K562 (cell line): ENCODE measurements at regions of chr7 and their contacts with region 1.

Region 1: DNA sequence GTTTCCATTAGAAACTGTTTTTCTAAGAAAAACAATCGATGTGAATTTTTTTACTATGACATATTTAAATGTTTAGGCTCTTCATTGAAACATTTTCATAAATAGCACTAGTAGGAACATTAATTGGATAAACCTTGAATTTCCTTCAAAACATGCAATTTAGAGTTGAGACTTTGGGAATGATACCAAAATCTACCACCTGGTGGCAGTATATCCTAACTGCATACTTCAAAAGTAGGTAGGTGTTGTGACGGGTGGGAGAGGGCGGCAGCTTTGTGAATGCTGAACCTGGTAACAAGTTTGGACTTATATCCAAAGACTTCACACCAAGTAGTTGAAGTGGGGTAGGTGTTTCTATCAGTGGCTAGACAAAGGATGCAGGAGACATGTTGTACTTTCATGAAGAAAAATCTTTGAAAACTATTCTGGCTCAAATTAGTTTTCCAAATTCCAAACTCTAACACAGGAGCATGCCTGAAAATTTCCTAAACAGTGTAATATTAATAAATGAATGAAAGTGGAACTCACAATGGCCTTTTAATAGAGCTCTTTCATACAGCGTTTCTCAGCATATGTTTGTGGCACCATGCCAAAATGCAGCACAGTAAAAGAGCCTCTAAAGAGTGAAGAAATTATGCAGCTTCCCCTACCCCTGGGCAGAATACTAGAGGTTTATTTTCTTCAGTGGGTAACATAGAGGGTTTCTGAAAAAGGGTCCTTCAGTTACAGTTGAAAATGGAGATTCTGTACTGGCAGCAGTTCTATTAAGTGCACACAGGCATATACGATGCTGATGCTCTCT is 201.0 kb upstream of the TPK1 start:
- DNase-seq: peak; percentile 41 to 66 (median 58)
- ATAC-seq: peak; percentile 81
- H3K4me3 ChIP-seq: no peak overlapping the region
- H3K27ac ChIP-seq: no peak overlapping the region
- H3K4me1 ChIP-seq: no peaks in the 10 kb centered on the region
- H3K27me3 ChIP-seq: no peaks in the 10 kb centered on the region
- CTCF ChIP-seq: peak; percentile 46 to 77 (median 75); a peak in 5 of 6 replicates
- EP300 ChIP-seq: no peak
- POLR2A ChIP-seq: no peak
- RAD21 ChIP-seq: peak; percentile 83 to 85

Region 2: DNA sequence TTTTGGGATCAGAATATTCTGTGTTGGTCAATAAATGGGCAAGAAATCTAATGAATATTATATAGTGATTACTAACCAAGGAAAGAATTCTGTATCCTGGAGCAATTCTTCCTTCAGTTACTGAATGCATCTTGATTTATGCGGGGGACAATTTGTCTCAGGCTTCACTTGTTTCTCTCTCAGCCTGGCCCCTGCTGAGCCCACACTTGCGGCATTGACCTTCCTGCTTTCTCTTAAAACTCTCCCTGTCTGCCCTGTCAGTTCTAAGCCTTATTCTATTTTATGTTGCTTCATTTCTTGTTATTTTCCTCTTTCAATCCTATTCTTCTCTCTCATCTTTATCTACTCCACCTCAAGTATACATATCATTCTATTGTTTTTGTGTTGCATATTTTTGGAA is 78.8 kb before region 1 on chr7:
- CTCF ChIA-PET with region 1: no interaction called
- POLR2A ChIA-PET with region 1: no interaction called
- in situ Hi-C with region 1: no loop called
- intact Hi-C with region 1: no loop called
- DNase-seq: no peak
- ATAC-seq: no peak
- H3K4me3 ChIP-seq: no peak overlapping the region
- H3K27ac ChIP-seq: no peak overlapping the region
- H3K4me1 ChIP-seq: no peaks in the 10 kb centered on the region
- H3K27me3 ChIP-seq: no peaks in the 10 kb centered on the region
- CTCF ChIP-seq: no peak
- EP300 ChIP-seq: no peak
- POLR2A ChIP-seq: no peak
- RAD21 ChIP-seq: no peak

Region 3: GRCh38 chr7:145050415-145050814 is 13.6 kb after region 1 on chr7:
- CTCF ChIA-PET with region 1: no interaction called
- POLR2A ChIA-PET with region 1: no interaction called
- in situ Hi-C with region 1: no loop called
- intact Hi-C with region 1: no loop called
- DNase-seq: no peak
- ATAC-seq: no peak
- H3K4me3 ChIP-seq: no peak overlapping the region
- H3K27ac ChIP-seq: no peak overlapping the region
- H3K4me1 ChIP-seq: no peaks in the 10 kb centered on the region
- H3K27me3 ChIP-seq: no peaks in the 10 kb centered on the region
- CTCF ChIP-seq: no peak
- EP300 ChIP-seq: no peak
- POLR2A ChIP-seq: no peak
- RAD21 ChIP-seq: no peak

Region 4: GRCh38 chr7:145848691-145849090 is 811.9 kb after region 1 on chr7:
- CTCF ChIA-PET with region 1: no interaction called
- POLR2A ChIA-PET with region 1: no interaction called
- in situ Hi-C with region 1: no loop called
- intact Hi-C with region 1: loop called (anchors 2 kb)
- DNase-seq: peak; percentile 21 to 61 (median 32)
- ATAC-seq: peak; percentile 95
- H3K4me3 ChIP-seq: no peak overlapping the region
- H3K27ac ChIP-seq: no peak overlapping the region
- H3K4me1 ChIP-seq: no peaks in the 10 kb centered on the region
- H3K27me3 ChIP-seq: no peaks in the 10 kb centered on the region
- CTCF ChIP-seq: peak; percentile 48 to 59 (median 59)
- EP300 ChIP-seq: no peak
- POLR2A ChIP-seq: no peak
- RAD21 ChIP-seq: peak; percentile 8 to 52; a peak in 2 of 4 replicates